MCF 10A (cell line): ENCODE measurements at regions of chr7 and their contacts with region 1.

Region 1: GRCh38 chr7:135326636-135327280 is 93.1 kb downstream of the STRA8 start:
- DNase-seq: no peak
- H3K4me3 Mint-ChIP-seq: no peak overlapping the region
- H3K27ac Mint-ChIP-seq: no peak overlapping the region
- H3K4me1 Mint-ChIP-seq: peaks cover 5% of the 10 kb centered on the region
- H3K27me3 Mint-ChIP-seq: no peaks in the 10 kb centered on the region
- CTCF ChIP-seq: no peak

Region 2: GRCh38 chr7:135291809-135292253 is 34.9 kb before region 1 on chr7:
- CTCF ChIA-PET with region 1: interaction called, 10 read pairs
- POLR2A ChIA-PET with region 1: interaction called, 9 read pairs
- intact Hi-C with region 1: no loop called
- DNase-seq: peak; percentile 80
- H3K4me3 Mint-ChIP-seq: no peak overlapping the region
- H3K27ac Mint-ChIP-seq: peak overlapping the region; percentile 83
- H3K4me1 Mint-ChIP-seq: peaks cover 13% of the 10 kb centered on the region
- H3K27me3 Mint-ChIP-seq: no peaks in the 10 kb centered on the region
- CTCF ChIP-seq: no peak